GM10248 (cell line): ENCODE measurements at regions of chr4 and their contacts with region 1.

Region 1: DNA sequence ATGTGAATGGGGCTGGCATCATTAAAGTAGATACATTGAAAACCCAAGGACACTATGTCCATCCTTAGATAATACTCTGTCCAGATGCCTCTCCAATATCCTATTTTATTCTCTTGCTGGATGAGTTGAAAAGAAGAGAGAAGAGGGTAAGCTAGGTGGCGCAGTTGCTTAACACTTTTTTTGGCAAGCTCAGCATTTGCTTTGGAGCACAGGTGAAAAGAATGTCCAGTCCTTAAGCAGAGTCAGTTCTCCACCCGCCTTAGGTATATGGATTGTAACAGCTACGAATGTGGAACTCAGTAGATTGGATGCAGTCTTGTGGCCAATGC is 208.4 kb downstream of the NWD2 start:
- DNase-seq: peak; percentile 71
- CTCF ChIP-seq: peak; percentile 72

Region 2: DNA sequence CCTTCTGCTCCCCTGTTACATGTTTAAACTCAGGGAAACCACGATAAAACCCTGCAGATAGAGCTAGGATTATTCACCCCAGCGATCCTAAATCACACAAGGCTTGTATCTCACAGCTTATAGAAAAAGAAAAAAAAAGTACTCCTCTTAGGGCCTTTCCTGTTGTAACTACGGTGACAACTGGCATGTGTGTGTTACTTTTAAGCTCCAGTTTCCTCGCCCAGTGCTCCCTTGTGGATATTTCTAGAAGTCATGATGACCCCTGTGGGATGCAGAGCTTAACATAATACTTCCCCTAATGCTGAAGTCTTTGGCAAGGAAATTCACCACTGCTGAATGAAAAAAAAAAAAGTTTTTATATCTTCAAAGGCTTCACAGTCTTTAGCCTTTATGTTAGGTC is 93.7 kb before region 1 on chr4:
- CTCF ChIA-PET with region 1: no interaction called
- POLR2A ChIA-PET with region 1: no interaction called
- DNase-seq: no peak
- CTCF ChIP-seq: no peak

Region 3: GRCh38 chr4:37441276-37441994 is 11.5 kb before region 1 on chr4:
- CTCF ChIA-PET with region 1: interaction called, 36 read pairs
- POLR2A ChIA-PET with region 1: no interaction called
- DNase-seq: no peak
- CTCF ChIP-seq: no peak

Region 4: DNA sequence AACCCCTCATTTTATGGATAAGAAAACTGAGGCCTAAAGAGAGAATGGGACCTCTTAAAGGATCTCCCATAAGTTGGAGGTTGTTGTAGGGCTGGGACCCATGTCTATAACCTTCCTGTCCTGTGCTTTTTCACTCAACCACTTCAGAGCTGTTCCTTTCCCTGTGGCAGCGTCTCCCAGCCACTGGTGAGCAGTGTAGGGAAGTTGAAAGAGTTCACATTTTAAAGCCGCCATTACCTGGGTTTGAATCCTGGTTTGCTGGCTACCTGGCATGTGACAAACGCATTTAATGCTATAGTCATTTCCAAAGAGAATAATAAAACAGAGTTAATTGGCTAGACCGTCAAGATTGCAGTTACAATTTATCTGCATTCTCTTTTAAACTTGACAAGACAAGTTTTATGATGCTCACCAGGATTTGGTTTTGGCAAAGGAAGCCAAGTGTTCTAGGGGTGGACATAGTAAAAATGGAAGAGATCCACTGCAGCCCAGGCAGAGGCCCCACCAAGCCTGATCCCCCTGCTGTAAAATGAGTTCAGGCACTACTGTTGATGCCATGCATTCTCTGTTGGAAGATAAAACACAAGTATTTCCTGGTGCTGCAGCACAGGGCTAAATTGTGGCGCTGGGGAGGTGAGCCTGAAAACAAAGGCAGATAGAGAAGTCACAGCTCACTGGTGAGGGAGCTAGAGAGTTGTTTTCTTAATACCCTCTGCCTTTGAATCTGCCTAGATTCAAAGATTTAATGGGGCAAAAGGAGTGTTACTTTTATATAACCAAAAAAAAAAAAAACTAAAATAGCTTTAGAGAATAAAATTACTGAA is 10.3 kb after region 1 on chr4:
- CTCF ChIA-PET with region 1: interaction called, 18 read pairs
- POLR2A ChIA-PET with region 1: no interaction called
- DNase-seq: no peak
- CTCF ChIP-seq: no peak

Region 5: GRCh38 chr4:37516057-37516775 is 63.3 kb after region 1 on chr4:
- CTCF ChIA-PET with region 1: no interaction called
- POLR2A ChIA-PET with region 1: no interaction called
- DNase-seq: no peak
- CTCF ChIP-seq: no peak

Region 6: DNA sequence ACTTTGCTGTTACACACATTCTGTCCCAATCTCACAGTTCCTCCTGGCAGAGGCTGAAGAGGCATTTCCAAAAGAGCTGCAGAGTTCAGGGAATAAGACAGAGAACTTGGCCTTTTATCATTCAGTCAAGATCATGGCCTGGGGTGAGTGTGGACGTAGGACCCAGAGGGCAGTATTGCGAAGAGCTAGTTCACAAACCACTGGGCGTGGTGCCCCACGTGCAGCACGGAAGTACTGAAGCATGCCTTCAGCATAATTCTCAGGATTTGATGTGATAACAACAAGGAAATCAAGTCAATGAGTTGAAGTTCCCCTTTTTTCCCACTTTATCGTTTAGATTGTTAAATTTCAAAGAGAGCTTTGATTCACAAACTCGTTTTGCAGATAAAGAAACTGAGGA is 115.6 kb after region 1 on chr4:
- CTCF ChIA-PET with region 1: interaction called, 23 read pairs
- POLR2A ChIA-PET with region 1: no interaction called
- DNase-seq: no peak
- CTCF ChIP-seq: no peak